ENCODE measurements at regions of chr4 and their contacts with region 1.

Region 1: GRCh38 chr4:25439918-25440477 is 62.9 kb downstream of the ANAPC4 start:
- DNase-seq: peak in 1 of 3 donors; percentile 18
- ATAC-seq: peak; percentile 68 to 72
- H3K4me3 ChIP-seq: no peak overlapping the region
- H3K27ac ChIP-seq: no peak overlapping the region
- H3K4me1 ChIP-seq: no peaks in the 10 kb centered on the region
- H3K27me3 ChIP-seq: no peaks in the 10 kb centered on the region

Region 2: DNA sequence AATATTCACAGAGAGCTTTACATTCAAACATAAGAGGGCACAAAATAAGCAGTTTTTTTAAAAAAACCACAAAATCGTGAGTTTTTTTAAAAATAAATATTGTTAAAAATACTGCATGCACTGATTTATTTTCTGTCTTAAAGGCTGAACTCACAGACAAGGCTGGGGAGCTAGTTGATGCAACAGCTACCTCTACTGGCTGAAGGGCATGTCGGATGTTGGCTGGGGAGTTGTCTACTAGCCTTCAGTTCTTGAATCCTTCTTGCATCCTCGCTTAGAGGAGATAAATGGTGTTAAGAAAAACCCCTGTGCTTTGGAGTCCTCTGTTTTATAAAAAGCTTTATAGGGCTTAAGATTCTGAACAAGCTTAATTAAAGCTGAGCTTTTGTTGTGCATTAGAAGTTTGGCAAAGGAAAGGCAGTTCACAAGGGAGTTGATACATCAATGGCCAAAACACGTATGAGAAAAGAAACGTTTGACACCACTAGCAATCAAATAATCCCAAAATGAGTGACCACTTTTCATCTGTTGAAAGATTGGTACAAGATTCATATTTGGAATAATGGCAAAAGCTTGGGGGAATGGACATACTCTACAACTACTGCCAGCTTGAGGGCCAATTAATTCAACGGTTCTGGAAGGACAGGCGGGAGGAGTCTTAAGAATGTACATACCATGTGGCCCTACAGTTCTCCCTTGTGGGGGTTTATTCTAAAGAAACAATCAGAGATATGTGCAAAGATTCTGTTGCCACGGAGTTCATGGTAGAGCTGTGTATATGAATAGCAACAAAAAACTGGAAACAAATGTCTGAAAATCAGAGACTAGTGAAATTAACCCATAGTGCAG is 328.1 kb after region 1 on chr4:
- intact Hi-C with region 1: loop called (anchors 2 to 10 kb)
- DNase-seq: peak in 2 of 3 donors; percentile 53 to 69
- ATAC-seq: peak; percentile 83 to 89
- H3K4me3 ChIP-seq: no peak overlapping the region
- H3K27ac ChIP-seq: no peak overlapping the region
- H3K4me1 ChIP-seq: no peaks in the 10 kb centered on the region
- H3K27me3 ChIP-seq: no peaks in the 10 kb centered on the region

Region 3: GRCh38 chr4:25779016-25779415 is 339.0 kb after region 1 on chr4:
- intact Hi-C with region 1: loop called in 1 of 4 experiments (anchors 10 kb)
- DNase-seq: no peak
- ATAC-seq: no peak
- H3K4me3 ChIP-seq: no peak overlapping the region
- H3K27ac ChIP-seq: no peak overlapping the region
- H3K4me1 ChIP-seq: no peaks in the 10 kb centered on the region
- H3K27me3 ChIP-seq: no peaks in the 10 kb centered on the region